ENCODE measurements at regions of chr2 and their contacts with region 1.

Region 1: DNA sequence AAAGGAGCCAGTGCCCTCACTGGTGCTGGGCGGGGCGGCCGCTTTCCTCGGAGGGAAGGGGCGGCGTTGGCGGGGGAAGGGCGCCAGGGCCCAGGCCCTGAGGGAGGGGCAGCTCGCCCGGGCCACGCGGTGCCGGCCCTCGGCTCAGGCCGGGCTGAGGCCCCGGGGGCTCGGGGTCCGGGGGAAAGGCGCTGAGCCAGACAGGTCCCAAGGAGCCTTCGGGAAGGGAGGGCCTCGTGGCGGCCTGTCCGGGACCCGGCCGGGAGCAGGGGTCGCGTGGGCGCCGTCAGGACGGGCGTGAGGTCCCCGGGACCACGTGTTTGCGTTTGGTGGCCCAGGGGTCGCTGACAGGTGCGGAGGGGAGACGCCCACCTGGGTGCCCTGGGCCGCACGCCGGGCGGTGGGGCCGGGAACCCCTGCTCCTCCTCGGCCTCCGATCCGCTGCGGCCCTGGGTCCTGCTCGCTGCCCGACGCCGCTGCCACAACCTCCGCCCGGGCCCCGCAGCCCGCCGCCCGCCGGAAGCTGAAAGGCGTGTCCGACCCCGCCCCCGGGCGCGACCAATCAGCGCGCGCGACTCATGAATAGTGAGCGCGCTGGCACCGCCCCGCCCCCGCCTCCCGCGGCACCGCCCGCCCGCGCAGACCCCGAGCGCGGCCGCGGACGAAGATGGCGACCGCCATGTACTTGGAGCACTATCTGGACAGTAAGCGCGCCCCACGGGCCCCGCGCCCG is at the start of gene ING5:
- DNase-seq: peak; percentile 96 to 97
- H3K4me3 ChIP-seq: peak within 1 kb of the TSS; percentile 70 to 98 (median 92)
- H3K27ac ChIP-seq: peak within 1 kb of the TSS; percentile 91 to 98
- H3K4me1 ChIP-seq: peaks cover 0 to 6% of the 10 kb centered on the region in 2 donors
- H3K27me3 ChIP-seq: no peaks in the 10 kb centered on the region
- CTCF ChIP-seq: peak in 1 of 3 donors; percentile 32
- POLR2A ChIP-seq: no peak
- total RNA-seq, gene ING5: 29.6 to 49.0 (median 45.6) TPM

Region 2: GRCh38 chr2:241637000-241637791 is 64.4 kb before region 1 on chr2 and contains the starts of genes ATG4B and THAP4:
- intact Hi-C with region 1: no loop called
- DNase-seq: peak; percentile 72 to 79
- H3K4me3 ChIP-seq: peak within 1 kb of the TSS; percentile 78 to 97 (median 92)
- H3K27ac ChIP-seq: peak within 1 kb of the TSS; percentile 99 to 100
- H3K4me1 ChIP-seq: peaks cover 8 to 23% of the 10 kb centered on the region in 2 donors
- H3K27me3 ChIP-seq: no peaks in the 10 kb centered on the region
- CTCF ChIP-seq: no peak
- POLR2A ChIP-seq: peak; percentile 45
- total RNA-seq, gene ATG4B: 47.7 to 71.1 (median 64.2) TPM
- total RNA-seq, gene THAP4: 35.3 to 45.9 (median 38.1) TPM

Region 3: DNA sequence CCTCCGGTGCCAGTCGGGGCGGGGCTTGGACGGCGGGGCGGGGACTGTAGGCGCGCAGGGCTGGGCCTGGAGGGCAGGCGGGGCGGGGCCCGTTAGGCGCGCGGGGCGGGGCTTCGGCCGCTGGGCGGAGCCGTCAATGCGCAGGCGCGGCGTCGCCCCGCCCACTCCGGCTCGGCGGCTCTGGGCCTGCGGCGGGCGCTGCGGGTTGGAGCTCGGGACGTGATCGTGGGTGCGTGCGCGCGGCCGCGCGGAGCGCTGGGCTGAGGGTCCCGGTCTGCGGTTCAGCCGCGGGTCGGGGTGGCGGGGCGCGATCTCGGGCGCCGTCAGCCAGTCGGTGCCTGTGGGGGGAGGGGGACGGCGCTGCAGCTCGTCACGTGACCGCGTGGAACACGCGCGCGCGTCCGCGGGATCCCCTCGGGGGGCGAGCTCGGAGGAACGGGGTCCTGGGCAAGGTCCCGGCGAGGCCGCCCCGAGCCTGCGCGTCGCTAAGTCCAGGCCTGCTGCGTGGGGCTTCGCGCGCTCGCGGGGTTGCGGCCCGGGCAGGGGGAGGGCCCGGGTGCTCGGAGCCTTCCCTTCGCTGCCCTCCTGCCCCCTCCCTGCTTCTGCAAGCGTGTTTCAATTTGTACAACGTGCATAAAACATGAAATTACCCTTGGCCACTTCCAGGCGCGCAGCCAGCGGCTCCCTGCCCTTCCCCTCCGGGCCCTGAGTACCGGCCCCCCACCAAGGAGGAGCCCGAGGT is 33.1 kb after region 1 on chr2 and contains the start of gene D2HGDH:
- intact Hi-C with region 1: loop called (anchors 2 kb)
- DNase-seq: peak; percentile 86 to 93
- H3K4me3 ChIP-seq: peak within 1 kb of the TSS; percentile 92 to 99 (median 93)
- H3K27ac ChIP-seq: peak within 1 kb of the TSS; percentile 82 to 95
- H3K4me1 ChIP-seq: no peaks in the 10 kb centered on the region
- H3K27me3 ChIP-seq: no peaks in the 10 kb centered on the region
- CTCF ChIP-seq: no peak
- POLR2A ChIP-seq: no peak
- total RNA-seq, gene D2HGDH: 16.3 to 29.2 (median 22.2) TPM

Region 4: GRCh38 chr2:241965931-241966412 is 264.4 kb after region 1 on chr2:
- intact Hi-C with region 1: no loop called
- DNase-seq: peak; percentile 17 to 24
- H3K4me3 ChIP-seq: no peak overlapping the region
- H3K27ac ChIP-seq: no peak overlapping the region
- H3K4me1 ChIP-seq: no peaks in the 10 kb centered on the region
- H3K27me3 ChIP-seq: no peaks in the 10 kb centered on the region
- CTCF ChIP-seq: no peak
- POLR2A ChIP-seq: no peak